ENCODE measurements at regions of chr6 and their contacts with region 1.

Region 1: GRCh38 chr6:149060300-149060997 is 257.1 kb upstream of the TAB2 start:
- DNase-seq: peak; percentile 88
- H3K4me3 Mint-ChIP-seq: peak overlapping the region; percentile 80
- H3K27ac Mint-ChIP-seq: peak overlapping the region; percentile 95
- H3K4me1 Mint-ChIP-seq: peaks cover 57% of the 10 kb centered on the region
- H3K27me3 Mint-ChIP-seq: no peaks in the 10 kb centered on the region

Region 2: DNA sequence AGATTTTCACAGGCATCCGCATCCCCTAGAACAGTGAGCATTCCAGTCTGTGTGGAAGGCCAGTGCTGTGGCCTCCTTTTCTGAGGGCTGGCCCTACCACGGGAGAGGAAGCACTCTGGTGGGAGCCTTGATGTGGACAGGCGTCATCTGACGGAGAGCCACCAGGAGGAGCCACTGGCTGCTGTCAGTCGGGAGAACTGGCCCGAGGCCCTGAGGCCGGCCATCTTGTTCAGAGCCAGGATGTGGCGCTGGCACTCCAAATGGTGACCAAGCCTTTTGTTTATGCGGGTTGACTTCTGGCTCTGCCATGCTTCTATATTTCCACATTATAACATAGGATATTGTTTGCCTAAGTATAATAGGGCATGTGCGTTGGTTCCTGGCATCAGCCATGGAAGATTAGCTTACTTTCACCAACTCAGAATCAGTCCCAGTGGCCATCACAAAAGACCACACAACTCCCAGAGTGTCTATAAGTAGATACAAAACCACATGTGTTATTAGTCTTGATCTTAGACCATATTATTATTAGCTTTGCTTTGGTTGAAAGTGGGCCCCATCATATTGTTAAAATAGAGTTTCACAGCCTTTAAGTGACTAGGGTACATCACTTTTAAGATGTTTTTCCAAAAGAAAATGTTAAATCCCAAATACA is 16.8 kb before region 1 on chr6:
- intact Hi-C with region 1: loop called (anchors 2 kb)
- DNase-seq: peak; percentile 72
- H3K4me3 Mint-ChIP-seq: no peak overlapping the region
- H3K27ac Mint-ChIP-seq: no peak overlapping the region
- H3K4me1 Mint-ChIP-seq: peaks cover 61% of the 10 kb centered on the region
- H3K27me3 Mint-ChIP-seq: no peaks in the 10 kb centered on the region

Region 3: DNA sequence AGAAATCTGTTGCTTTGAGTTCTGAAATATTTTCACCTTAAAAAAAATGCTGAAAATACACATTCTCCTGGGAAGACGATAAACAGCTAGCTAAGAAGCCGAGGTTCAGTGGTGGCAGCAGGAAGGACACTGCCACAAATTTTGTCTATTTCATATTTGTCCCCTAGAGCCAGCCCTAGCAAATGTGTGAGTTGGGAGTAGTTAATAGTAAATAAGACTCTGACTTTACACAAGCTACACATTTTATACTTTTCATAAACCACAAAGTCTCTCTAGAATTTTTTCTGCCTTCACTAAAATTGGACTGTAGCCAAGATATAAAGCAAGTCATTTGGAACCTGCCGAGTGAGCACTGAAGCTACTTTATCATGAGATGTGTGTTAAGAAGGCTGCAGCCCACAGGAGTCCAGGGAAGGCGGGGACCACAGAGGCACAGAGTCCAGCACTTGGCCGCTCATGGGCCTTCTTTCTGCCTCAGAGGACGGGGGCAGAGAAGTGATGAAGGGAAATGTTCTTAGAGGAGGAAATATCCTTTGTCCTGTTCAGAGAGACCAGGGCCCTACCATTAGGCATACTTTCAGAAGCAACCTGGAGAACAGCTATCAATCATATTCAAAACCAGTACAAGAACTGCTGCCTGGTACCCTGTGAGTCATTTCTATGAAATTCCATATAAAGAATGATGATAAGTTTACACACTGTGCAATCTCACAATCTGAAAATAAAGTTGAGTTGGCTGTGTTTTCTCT is 15.3 kb after region 1 on chr6:
- intact Hi-C with region 1: loop called (anchors 1 kb)
- DNase-seq: peak; percentile 68
- H3K4me3 Mint-ChIP-seq: peak overlapping the region; percentile 10
- H3K27ac Mint-ChIP-seq: peak overlapping the region; percentile 87
- H3K4me1 Mint-ChIP-seq: peaks cover 45% of the 10 kb centered on the region
- H3K27me3 Mint-ChIP-seq: no peaks in the 10 kb centered on the region

Region 4: GRCh38 chr6:149094156-149094555 is 33.7 kb after region 1 on chr6:
- intact Hi-C with region 1: no loop called
- DNase-seq: peak; percentile 76
- H3K4me3 Mint-ChIP-seq: peak overlapping the region; percentile 71
- H3K27ac Mint-ChIP-seq: peak overlapping the region; percentile 95
- H3K4me1 Mint-ChIP-seq: peaks cover 74% of the 10 kb centered on the region
- H3K27me3 Mint-ChIP-seq: no peaks in the 10 kb centered on the region

Region 5: GRCh38 chr6:149211046-149211571 is 150.7 kb after region 1 on chr6:
- intact Hi-C with region 1: no loop called
- DNase-seq: peak; percentile 74
- H3K4me3 Mint-ChIP-seq: no peak overlapping the region
- H3K27ac Mint-ChIP-seq: no peak overlapping the region
- H3K4me1 Mint-ChIP-seq: peaks cover 29% of the 10 kb centered on the region
- H3K27me3 Mint-ChIP-seq: no peaks in the 10 kb centered on the region